Common myeloid progenitor, CD34-positive (primary cell): ENCODE measurements at regions of chr2 and their contacts with region 1.

Region 1: DNA sequence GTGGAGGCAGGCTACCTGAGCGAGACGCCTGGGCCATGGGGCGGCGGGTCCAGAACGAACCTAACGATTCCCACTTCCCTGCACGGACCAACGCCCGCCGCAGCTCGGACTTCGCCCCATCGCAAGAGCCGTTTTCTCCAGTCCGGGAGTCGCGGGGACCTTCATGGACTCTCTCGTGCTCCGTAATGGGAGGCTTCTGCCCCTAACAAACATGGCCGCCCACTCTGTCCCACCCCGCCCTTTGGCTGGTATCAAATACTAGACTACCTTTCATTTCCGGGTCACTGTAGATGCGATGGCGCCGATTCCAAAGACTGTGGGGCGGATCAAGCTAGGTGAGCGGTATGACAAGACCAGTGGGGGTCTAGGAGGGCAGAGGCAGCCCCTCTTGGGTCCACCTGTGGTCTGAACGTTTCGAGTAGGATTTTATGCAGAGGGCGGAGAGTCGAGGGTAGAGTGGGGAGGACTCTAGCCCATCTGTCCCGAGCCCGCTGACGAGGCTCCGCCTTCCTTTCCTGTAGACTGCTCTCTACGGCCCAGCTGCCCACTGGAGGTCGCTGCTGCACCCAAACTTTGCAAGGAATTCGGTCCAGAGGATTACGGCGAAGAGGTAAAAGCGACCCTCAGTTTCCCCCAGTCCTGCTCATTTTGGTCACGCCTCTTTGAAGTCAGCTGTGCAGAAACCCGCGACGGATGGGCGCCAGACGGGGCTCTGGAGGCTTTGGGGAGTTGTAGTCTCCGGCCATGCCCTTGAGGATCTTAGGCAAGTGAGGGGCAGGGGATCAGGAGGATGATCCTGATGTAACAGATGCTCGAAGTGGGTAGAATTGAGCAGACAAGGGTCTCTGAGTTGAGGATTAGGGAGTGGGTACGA is at the starts of genes CCDC142 and TTC31:
- DNase-seq: peak; percentile 94 to 96 (median 96)
- H3K4me3 ChIP-seq: peak within 1 kb of the TSS; percentile 88 to 100 (median 94)
- H3K27ac ChIP-seq: peak within 1 kb of the TSS; percentile 61 to 81
- H3K4me1 ChIP-seq: peaks cover 4 to 27% (median 23%) of the 10 kb centered on the region in 4 experiments
- H3K27me3 ChIP-seq: no peaks in the 10 kb centered on the region

Region 2: GRCh38 chr2:74458132-74458925 is 24.7 kb before region 1 on chr2 and contains the start of gene WBP1:
- CTCF ChIA-PET with region 1: interaction called, 59 read pairs
- POLR2A ChIA-PET with region 1: interaction called, 16 read pairs
- DNase-seq: peak; percentile 100
- H3K4me3 ChIP-seq: peak within 1 kb of the TSS; percentile 49 to 98 (median 84)
- H3K27ac ChIP-seq: peak within 1 kb of the TSS; percentile 88 to 94
- H3K4me1 ChIP-seq: peaks cover 6 to 48% (median 33%) of the 10 kb centered on the region in 4 experiments
- H3K27me3 ChIP-seq: no peaks in the 10 kb centered on the region

Region 3: GRCh38 chr2:74472086-74472944 is 10.7 kb before region 1 on chr2 and contains the start of gene MRPL53:
- CTCF ChIA-PET with region 1: interaction called, 39 read pairs
- POLR2A ChIA-PET with region 1: interaction called, 13 read pairs
- DNase-seq: peak; percentile 98 to 99 (median 99)
- H3K4me3 ChIP-seq: peak within 1 kb of the TSS; percentile 40 to 93 (median 87)
- H3K27ac ChIP-seq: peak within 1 kb of the TSS; percentile 78 to 84
- H3K4me1 ChIP-seq: peaks cover 7 to 35% (median 21%) of the 10 kb centered on the region in 4 experiments
- H3K27me3 ChIP-seq: no peaks in the 10 kb centered on the region

Region 4: GRCh38 chr2:74498500-74499266 is 15.6 kb after region 1 on chr2:
- CTCF ChIA-PET with region 1: interaction called, 15 read pairs
- POLR2A ChIA-PET with region 1: no interaction called
- DNase-seq: peak in 2 of 3 donors; percentile 48 to 55
- H3K4me3 ChIP-seq: peak overlapping the region; percentile 17 to 73 (median 58)
- H3K27ac ChIP-seq: no peak overlapping the region
- H3K4me1 ChIP-seq: peaks cover 4 to 43% (median 40%) of the 10 kb centered on the region in 4 experiments
- H3K27me3 ChIP-seq: peaks cover 0 to 77% (median 53%) of the 10 kb centered on the region in 5 experiments

Region 5: DNA sequence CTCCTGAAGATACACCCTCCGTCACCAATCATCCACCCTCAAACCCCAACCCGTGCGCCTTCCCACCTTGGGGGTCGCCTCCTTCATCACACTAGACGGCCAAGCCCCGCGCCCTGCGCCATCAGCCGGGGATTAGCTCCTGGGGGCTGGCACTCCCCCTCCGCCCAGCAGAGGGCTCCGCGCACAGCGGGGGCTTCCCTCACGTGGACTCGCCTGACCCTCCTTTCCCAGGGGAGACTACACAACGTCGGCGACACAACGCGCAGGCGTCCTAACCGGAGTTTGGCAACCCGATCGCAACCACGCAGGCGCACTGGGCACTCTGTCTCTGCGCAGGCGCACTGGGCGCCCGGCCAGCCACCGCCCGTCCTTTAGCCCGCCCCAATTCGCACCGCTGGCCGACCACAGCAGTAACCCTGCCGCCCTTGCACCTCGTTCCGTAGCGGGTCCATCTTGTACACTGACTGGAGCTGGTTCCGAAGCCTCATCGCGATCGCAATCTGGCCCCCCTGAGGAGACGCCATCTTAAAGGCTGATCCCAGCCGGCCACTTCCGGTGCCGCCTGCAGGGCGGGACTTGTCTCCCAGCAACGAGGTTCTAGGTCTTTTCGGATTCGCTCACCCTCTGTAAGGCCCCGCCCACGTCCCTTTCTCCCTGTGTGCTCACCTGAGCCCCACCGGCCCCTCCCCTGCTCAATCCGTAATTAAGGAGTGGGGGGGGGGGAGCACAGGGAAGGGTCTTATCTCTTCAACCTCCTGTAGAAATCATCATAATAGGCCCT is 24.3 kb after region 1 on chr2 and contains the start of gene PCGF1:
- CTCF ChIA-PET with region 1: interaction called, 15 read pairs
- POLR2A ChIA-PET with region 1: no interaction called
- DNase-seq: peak; percentile 97 to 98 (median 97)
- H3K4me3 ChIP-seq: peak within 1 kb of the TSS; percentile 80 to 99 (median 91)
- H3K27ac ChIP-seq: peak within 1 kb of the TSS; percentile 92 to 96
- H3K4me1 ChIP-seq: peaks cover 0 to 52% (median 34%) of the 10 kb centered on the region in 4 experiments
- H3K27me3 ChIP-seq: peaks cover 7 to 63% (median 33%) of the 10 kb centered on the region in 5 experiments